Heart left ventricle (tissue), 16 donors: ENCODE measurements at regions of chr20 and their contacts with region 1.

Region 1: GRCh38 chr20:51306503-51307358 is 235.8 kb downstream of the NFATC2 start:
- DNase-seq: peak; percentile 61 to 85 (median 68)
- ATAC-seq: peak; percentile 90 to 97 (median 92)
- H3K4me3 ChIP-seq: no peak overlapping the region
- H3K27ac ChIP-seq: no peak overlapping the region
- H3K4me1 ChIP-seq: peaks cover 0 to 7% (median 0%) of the 10 kb centered on the region in 12 donors
- H3K27me3 ChIP-seq: peaks cover 0 to 15% (median 0%) of the 10 kb centered on the region in 9 donors
- CTCF ChIP-seq: peak; percentile 86 to 96 (median 90)
- POLR2A ChIP-seq: no peak

Region 2: DNA sequence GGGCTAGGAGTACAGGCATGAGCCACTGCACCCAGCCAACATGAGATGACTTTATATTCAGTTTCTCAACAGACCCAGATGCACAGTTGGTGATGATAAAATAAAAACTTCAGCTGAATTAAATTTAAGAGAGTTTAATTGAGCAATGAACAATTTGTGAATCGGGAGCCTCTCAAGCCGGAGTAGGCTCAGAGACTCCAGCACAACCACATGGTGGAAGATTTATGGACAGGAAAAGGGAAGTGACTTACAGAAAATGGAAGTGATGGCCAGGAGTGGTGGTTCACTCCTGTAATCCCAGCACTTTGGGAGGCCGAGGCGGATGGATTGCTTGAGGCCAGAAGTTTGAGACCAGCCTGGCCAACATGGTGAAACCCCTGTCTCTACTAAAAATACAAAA is 522.3 kb before region 1 on chr20:
- intact Hi-C with region 1: no loop called
- DNase-seq: no peak
- ATAC-seq: no peak
- H3K4me3 ChIP-seq: no peak overlapping the region
- H3K27ac ChIP-seq: no peak overlapping the region
- H3K4me1 ChIP-seq: peaks cover 0 to 10% (median 0%) of the 10 kb centered on the region in 12 donors
- H3K27me3 ChIP-seq: no peaks in the 10 kb centered on the region
- CTCF ChIP-seq: no peak
- POLR2A ChIP-seq: no peak

Region 3: DNA sequence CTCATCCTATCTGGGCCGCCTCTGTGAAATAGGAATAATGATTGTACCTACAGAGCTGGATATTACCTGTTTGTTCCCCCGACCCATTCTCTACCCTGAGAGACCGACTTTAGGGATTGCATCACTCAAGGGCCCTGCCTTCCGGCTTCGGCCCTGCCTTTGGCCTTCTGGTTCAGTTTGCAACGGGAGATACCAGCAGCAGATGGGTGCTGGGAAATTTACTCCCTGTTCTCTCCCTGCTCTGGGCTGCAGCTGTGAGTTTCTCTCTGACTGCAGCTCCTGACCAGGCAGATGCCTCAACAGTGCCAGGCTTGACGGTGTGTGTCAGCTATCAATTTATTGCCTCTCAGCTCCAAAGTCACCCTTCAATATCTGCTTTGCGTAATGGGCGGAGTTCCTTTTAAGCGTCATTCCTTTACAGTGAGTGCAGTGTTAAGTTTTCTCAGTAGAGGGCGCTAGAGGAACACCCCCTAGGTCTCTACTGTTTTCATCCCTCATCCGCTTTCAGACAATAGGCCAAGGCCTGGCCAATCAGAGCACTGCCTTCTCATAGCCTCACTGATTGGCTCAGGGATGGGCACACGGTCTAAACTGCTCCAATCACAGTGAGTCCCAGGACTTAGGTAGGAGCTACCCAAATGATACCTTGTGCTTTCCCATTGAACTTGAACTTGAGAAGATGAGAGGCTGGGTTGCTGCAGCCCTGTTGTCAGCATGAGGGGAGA is 313.8 kb before region 1 on chr20:
- intact Hi-C with region 1: loop called in 5 of 10 experiments (anchors 2 to 5 kb)
- DNase-seq: no peak
- ATAC-seq: peak in 3 of 4 donors; percentile 30 to 79 (median 60)
- H3K4me3 ChIP-seq: no peak overlapping the region
- H3K27ac ChIP-seq: no peak overlapping the region
- H3K4me1 ChIP-seq: no peaks in the 10 kb centered on the region
- H3K27me3 ChIP-seq: peaks cover 0 to 29% (median 0%) of the 10 kb centered on the region in 9 donors
- CTCF ChIP-seq: peak; percentile 25 to 54 (median 36)
- POLR2A ChIP-seq: no peak

Region 4: DNA sequence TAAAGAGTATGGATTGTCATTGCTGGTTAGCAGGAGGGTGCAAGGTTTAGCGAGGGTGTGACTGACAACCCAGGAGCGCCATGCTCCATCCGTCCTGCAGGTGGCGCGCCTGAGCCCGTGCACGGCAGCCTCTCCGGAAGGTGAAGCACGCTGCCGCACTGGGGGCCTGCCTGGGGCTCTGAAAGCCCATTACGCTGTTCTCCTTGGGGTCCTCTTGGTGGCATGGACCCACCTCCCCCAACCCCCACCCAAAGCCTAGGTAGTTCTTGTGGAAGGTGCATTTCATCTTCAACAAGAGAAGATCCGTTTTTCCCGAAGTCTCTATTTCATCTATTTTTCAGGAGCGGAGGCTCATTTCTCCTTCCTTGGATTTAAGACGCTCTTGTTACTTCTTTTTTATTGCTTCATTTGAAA is 86.4 kb before region 1 on chr20:
- intact Hi-C with region 1: loop called in 7 of 10 experiments (anchors 2 to 5 kb)
- DNase-seq: peak in 2 of 5 donors; percentile 22 to 34
- ATAC-seq: peak in 1 of 4 donors; percentile 44
- H3K4me3 ChIP-seq: no peak overlapping the region
- H3K27ac ChIP-seq: no peak overlapping the region
- H3K4me1 ChIP-seq: peaks cover 0 to 3% (median 0%) of the 10 kb centered on the region in 12 donors
- H3K27me3 ChIP-seq: peaks cover 0 to 61% (median 33%) of the 10 kb centered on the region in 9 donors
- CTCF ChIP-seq: peak; percentile 57 to 88 (median 74)
- POLR2A ChIP-seq: no peak

Region 5: DNA sequence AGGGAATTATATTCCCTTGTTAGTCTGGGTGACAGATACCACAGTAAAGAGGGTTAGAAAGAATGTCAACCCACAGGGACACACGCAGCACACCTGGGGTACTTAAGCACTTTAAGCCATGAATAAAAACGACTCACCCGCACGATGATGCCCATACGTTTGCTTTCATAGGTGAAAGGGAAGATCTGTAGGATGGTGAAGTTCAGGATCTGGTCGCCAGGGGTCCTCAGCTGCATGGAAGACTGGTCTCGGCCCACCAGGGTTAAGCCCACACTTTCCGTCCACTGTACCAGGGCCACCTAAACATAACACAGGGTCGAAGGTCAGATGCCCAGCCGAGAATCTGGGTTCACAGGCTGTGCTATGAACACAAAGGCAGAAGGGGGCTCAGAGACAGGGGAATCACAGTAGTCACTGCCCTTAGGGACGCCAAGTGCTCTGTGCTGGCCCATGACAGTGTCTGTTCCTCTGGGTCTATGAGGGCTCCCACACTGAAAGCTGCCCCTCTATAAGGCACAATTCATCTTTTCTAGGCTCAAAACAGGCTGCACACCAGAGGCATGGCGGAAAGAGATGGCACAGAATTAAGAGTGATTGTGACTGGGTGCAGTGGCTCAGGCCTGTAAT is 332.6 kb after region 1 on chr20:
- intact Hi-C with region 1: no loop called
- DNase-seq: peak; percentile 44 to 74 (median 52)
- ATAC-seq: peak; percentile 59 to 87 (median 78)
- H3K4me3 ChIP-seq: no peak overlapping the region
- H3K27ac ChIP-seq: no peak overlapping the region
- H3K4me1 ChIP-seq: peaks cover 0 to 8% (median under 1%) of the 10 kb centered on the region in 12 donors
- H3K27me3 ChIP-seq: no peaks in the 10 kb centered on the region
- CTCF ChIP-seq: peak; percentile 73 to 90 (median 84)
- POLR2A ChIP-seq: no peak